Activated B cell treated with CpG ODN at 0.5 μM for 24 hours (primary cell): ENCODE measurements at regions of chr6 and their contacts with region 1.

Region 1: GRCh38 chr6:43263314-43264178 is 20.3 kb downstream of the TTBK1 start:
- DNase-seq: peak; percentile 72
- ATAC-seq: peak; percentile 100
- H3K4me3 Mint-ChIP-seq: no peak overlapping the region
- H3K27ac Mint-ChIP-seq: peak overlapping the region; percentile 12
- H3K4me1 Mint-ChIP-seq: peaks cover 6% of the 10 kb centered on the region
- H3K27me3 Mint-ChIP-seq: no peaks in the 10 kb centered on the region
- CTCF ChIP-seq: peak; percentile 27

Region 2: DNA sequence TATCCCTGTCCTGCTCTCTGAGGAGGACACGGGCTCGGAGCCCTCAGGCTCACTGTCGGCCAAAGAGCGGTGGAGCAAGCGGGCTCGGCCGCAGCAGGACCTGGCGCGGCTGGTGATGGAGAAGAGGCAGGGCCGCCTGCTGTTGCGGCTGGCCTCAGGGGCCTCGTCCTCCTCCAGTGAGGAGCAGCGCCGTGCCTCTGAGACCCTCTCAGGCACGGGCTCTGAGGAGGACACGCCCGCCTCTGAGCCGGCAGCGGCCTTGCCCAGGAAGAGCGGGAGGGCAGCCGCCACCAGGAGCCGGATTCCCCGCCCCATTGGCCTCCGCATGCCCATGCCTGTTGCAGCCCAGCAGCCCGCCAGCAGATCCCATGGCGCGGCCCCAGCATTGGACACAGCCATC is 20.4 kb after region 1 on chr6:
- CTCF ChIA-PET with region 1: no interaction called
- POLR2A ChIA-PET with region 1: no interaction called
- intact Hi-C with region 1: no loop called
- DNase-seq: no peak
- ATAC-seq: no peak
- H3K4me3 Mint-ChIP-seq: no peak overlapping the region
- H3K27ac Mint-ChIP-seq: no peak overlapping the region
- H3K4me1 Mint-ChIP-seq: peaks cover 7% of the 10 kb centered on the region
- H3K27me3 Mint-ChIP-seq: peaks cover 38% of the 10 kb centered on the region
- CTCF ChIP-seq: no peak

Region 3: DNA sequence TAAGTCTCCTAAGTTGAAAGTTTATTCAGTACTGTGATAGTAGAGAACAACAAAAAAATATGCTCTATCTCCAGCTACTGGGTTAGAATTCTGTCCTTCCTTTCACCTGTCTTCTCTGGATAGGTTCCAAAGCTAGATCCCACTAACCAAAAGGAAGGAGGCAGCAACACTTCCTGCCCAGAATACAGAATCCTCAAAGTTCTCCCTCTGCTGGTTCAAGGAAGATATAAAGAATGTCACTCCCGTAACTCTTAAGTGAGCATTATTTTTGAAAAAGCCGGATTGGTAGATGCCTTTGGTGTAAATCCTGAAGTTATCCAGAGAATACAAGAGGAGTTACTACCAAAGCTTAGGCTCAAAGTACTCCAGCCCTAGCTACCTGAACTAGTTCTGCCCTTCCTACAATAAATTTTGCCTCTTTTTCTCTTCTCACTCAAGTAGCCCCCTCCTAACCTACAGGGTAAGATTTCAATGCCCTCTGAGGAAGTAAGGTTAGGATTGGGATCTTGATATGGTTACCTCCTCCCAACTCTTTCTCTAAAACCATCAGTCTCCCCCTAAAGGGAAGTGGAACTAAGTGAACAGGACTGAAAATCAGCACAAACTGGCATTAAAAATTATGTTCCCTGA is 71.0 kb after region 1 on chr6:
- CTCF ChIA-PET with region 1: interaction called, 9 read pairs
- POLR2A ChIA-PET with region 1: no interaction called
- intact Hi-C with region 1: loop called (anchors 1 kb)
- DNase-seq: no peak
- ATAC-seq: no peak
- H3K4me3 Mint-ChIP-seq: no peak overlapping the region
- H3K27ac Mint-ChIP-seq: peak overlapping the region; percentile 15
- H3K4me1 Mint-ChIP-seq: peaks cover 56% of the 10 kb centered on the region
- H3K27me3 Mint-ChIP-seq: no peaks in the 10 kb centered on the region
- CTCF ChIP-seq: no peak

Region 4: GRCh38 chr6:43355862-43356590 is 92.5 kb after region 1 on chr6:
- CTCF ChIA-PET with region 1: interaction called, 20 read pairs
- POLR2A ChIA-PET with region 1: no interaction called
- intact Hi-C with region 1: loop called (anchors 1 kb)
- DNase-seq: no peak
- ATAC-seq: peak; percentile 65
- H3K4me3 Mint-ChIP-seq: no peak overlapping the region
- H3K27ac Mint-ChIP-seq: no peak overlapping the region
- H3K4me1 Mint-ChIP-seq: peaks cover 28% of the 10 kb centered on the region
- H3K27me3 Mint-ChIP-seq: no peaks in the 10 kb centered on the region
- CTCF ChIP-seq: no peak

Region 5: GRCh38 chr6:43402820-43403219 is 139.3 kb after region 1 on chr6:
- CTCF ChIA-PET with region 1: interaction called, 24 read pairs
- POLR2A ChIA-PET with region 1: no interaction called
- intact Hi-C with region 1: loop called (anchors 1 kb)
- DNase-seq: no peak
- ATAC-seq: no peak
- H3K4me3 Mint-ChIP-seq: no peak overlapping the region
- H3K27ac Mint-ChIP-seq: no peak overlapping the region
- H3K4me1 Mint-ChIP-seq: peaks cover 4% of the 10 kb centered on the region
- H3K27me3 Mint-ChIP-seq: peaks cover 23% of the 10 kb centered on the region
- CTCF ChIP-seq: no peak

Region 6: DNA sequence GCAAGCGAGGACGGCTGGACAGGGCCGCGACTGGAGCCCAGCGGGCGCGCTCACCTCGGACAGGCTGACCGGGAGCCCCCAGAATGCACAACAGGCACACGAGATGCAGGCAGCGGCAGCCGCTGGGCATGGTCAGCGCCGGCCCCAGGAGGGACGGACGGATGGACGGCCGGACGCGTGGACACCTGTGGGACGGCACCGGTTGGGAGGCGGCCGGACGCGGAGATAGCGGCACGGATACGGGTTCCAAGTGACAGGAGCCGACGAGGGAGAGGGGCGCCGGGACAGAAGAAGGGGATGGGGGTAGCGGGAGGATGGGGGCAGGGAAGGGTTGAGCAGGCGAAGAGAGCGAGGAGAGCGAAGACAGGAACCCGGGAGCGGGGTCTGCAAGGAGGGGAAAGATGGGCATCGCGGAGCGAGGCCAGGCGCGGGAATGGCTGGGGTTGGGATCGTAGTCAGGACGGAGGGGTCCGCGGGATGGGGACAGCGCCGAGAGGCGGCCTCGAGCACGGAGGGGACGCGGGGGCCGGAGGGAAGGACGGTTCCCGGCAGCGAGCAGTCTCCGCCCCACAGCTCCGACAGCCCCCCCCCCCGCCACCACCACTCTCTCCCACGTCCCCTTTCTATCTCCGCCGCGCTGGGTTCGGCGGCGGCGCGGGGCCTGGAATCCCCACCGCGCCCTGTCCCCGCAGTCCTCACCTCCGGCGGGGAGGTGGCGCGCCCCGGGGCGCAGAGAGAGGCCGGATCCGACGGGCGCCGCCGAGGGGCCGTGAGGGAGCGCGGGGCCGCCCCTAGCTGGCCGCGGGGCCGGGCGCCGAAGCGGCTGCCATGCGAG is 191.4 kb after region 1 on chr6:
- CTCF ChIA-PET with region 1: interaction called, 5 read pairs
- POLR2A ChIA-PET with region 1: interaction called, 4 read pairs
- intact Hi-C with region 1: loop called (anchors 2 kb)
- DNase-seq: peak; percentile 72
- ATAC-seq: peak; percentile 49
- H3K4me3 Mint-ChIP-seq: peak overlapping the region; percentile 85
- H3K27ac Mint-ChIP-seq: no peak overlapping the region
- H3K4me1 Mint-ChIP-seq: peaks cover 16% of the 10 kb centered on the region
- H3K27me3 Mint-ChIP-seq: no peaks in the 10 kb centered on the region
- CTCF ChIP-seq: no peak